A549 (cell line): ENCODE measurements at regions of chr10 and their contacts with region 1.

Region 1: GRCh38 chr10:102776779-102777456 is 33.2 kb downstream of the WBP1L start:
- DNase-seq: peak in 1 of 2 experiments; percentile 29
- ATAC-seq: peak; percentile 17 to 66; a peak in 4 of 6 replicates
- H3K4me3 ChIP-seq: no peak overlapping the region
- H3K27ac ChIP-seq: no peak overlapping the region
- H3K4me1 ChIP-seq: peaks cover 4% of the 10 kb centered on the region; the same call in 1 of the 3 replicates
- CTCF ChIP-seq: no peak
- EP300 ChIP-seq: no peak
- POLR2A ChIP-seq: no peak
- RAD21 ChIP-seq: no peak

Region 2: DNA sequence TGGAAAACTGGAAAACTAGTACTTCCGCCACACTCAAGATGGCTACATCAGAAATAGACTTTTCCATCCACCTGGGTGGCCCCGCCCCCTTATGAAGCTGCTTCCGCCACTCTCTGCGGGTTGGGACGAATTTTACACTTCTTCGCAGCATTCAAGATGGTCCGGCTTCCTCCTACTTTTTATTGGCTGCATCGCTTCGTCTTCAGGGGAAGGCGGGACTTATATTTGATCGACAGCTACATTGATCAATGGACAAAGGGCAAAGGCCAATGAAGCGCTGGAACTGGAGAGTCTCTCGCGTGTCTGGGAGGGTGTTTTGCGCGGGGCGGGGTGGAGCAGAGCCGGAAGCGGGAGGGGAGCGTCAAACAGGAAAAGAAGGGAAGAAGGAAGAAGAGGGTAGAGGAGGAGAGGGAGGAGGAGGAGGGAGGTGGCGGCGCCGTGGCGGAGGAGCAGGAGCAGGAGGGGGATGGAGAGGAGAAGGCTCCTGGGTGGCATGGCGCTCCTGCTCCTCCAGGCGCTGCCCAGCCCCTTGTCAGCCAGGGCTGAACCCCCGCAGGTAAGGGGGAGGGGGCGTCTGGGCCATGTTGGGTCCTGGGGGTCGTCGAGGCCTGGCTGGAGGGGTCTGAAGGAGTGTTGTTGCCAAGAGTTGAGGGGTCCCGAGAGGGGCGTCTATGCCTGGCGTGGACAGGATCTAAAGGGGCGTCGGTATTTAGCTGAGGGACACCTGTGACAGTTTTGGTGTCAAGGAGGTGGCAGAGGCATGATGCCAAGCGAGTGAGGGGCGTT is 33.1 kb before region 1 on chr10 and contains the start of gene WBP1L:
- CTCF ChIA-PET with region 1: interaction called, 3 read pairs
- POLR2A ChIA-PET with region 1: interaction called, 10 read pairs
- DNase-seq: peak; percentile 98 to 99
- ATAC-seq: peak; percentile 96 to 98
- H3K4me3 ChIP-seq: peak within 1 kb of the TSS; percentile 92
- H3K27ac ChIP-seq: peak within 1 kb of the TSS; percentile 91 to 94
- H3K4me1 ChIP-seq: peaks cover 12% of the 10 kb centered on the region; the same call in 1 of the 3 replicates
- CTCF ChIP-seq: no peak
- EP300 ChIP-seq: no peak
- POLR2A ChIP-seq: peak; percentile 88
- RAD21 ChIP-seq: no peak
- polyA plus RNA-seq, gene WBP1L: 23.5 and 25.1 TPM in 2 replicates